Ovary (tissue), 10 donors: ENCODE measurements at regions of chr9 and their contacts with region 1.

Region 1: GRCh38 chr9:98263482-98264357 is 8.3 kb upstream of the TBC1D2 start:
- DNase-seq: peak; percentile 64 to 81 (median 77)
- H3K4me3 ChIP-seq: no peak overlapping the region
- H3K27ac ChIP-seq: no peak overlapping the region
- H3K4me1 ChIP-seq: no peaks in the 10 kb centered on the region
- H3K27me3 ChIP-seq: no peaks in the 10 kb centered on the region
- CTCF ChIP-seq: peak; percentile 38 to 69 (median 50)
- EP300 ChIP-seq: no peak
- POLR2A ChIP-seq: no peak

Region 2: GRCh38 chr9:97934321-97935115 is 329.2 kb before region 1 on chr9:
- intact Hi-C with region 1: loop called in 3 of 4 experiments (anchors 5 to 10 kb)
- DNase-seq: no peak
- H3K4me3 ChIP-seq: no peak overlapping the region
- H3K27ac ChIP-seq: no peak overlapping the region
- H3K4me1 ChIP-seq: no peaks in the 10 kb centered on the region
- H3K27me3 ChIP-seq: no peaks in the 10 kb centered on the region
- CTCF ChIP-seq: no peak
- EP300 ChIP-seq: no peak
- POLR2A ChIP-seq: no peak

Region 3: DNA sequence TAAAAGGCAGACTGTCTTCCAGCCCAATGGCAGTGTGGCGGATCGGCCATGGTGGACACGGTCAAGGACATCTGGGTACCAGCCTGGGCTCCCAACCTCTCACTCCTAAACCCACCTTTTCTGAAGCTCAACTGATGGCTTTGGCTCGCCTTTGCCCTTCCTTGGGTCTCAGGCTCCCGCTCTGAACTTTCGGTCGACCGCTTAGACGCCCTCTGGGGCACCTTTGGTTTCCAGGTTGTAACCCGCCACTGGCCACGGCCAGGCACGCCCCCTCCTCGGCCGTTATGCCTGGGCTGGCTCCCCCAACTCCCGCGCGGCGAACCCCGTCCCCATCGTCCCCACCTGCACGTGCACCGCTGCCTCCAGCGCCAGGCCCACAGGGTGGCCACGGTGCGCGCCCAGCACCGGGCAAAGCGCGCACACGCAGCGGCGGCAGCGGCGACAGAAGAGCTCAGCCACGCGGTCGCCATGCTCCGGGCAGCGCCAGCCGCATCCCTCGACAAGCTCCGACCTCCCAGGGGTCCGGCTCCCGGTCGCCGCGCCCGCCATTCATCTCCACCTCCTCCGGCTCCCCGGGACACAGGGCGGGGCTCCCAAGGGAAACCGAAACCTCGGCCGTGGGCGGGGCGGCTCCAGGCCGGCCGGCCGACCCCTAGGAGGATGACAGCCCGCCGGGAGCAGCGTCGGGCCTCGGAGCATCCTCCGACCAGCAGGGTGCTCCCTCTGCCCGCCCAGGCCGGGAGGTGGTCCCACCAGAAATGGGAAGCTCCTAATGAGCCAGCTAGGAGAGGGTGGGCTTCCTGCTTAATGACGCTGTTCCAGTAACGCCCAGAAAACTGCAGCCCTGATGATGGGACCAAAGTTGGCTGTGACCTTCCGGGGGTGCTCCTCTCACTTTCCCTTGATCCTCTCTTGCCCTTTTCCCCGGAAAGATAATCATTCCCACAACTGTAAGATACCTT is 144.8 kb before region 1 on chr9 and contains the start of gene TRIM14:
- intact Hi-C with region 1: no loop called
- DNase-seq: peak; percentile 27 to 53 (median 40)
- H3K4me3 ChIP-seq: peak within 1 kb of the TSS; percentile 55
- H3K27ac ChIP-seq: peak within 1 kb of the TSS in 1 of 2 donors; percentile 30
- H3K4me1 ChIP-seq: peaks cover 2% of the 10 kb centered on the region
- H3K27me3 ChIP-seq: no peaks in the 10 kb centered on the region
- CTCF ChIP-seq: no peak
- EP300 ChIP-seq: no peak
- POLR2A ChIP-seq: no peak
- total RNA-seq, gene TRIM14: 3.6 to 12.2 (median 5.7) TPM

Region 4: DNA sequence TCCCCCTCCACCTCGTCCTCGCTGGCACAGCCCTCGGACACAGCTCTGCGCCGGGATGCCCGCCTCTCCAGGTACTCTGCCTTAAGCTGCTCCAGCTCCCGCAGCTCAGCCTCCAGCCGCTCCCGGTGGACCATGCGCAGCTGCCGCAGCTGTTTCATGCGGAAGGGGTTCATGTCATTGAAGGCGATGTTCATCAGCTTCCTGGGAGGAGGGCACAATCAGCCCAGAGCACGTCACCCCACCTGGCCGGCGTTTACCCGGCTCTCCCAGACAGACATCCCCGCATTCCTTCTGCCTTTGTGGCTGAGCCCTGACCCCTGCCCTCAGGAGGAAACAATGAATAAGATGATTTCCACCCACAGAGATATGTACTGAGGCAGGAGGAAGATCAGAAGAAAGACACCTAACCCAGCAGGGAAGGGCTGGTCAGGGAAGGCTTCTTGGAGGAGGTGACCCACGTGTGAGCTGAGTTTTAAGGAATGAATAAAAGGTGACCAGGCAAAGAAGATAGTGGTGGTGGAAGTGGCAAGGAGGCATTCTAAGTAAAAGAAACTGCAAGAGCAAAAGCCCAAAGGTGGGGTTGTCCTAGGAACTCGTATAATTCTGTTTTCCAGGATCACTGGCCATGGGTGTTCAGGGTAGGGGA is 64.2 kb before region 1 on chr9:
- intact Hi-C with region 1: loop called in 2 of 4 experiments (anchors 5 to 10 kb)
- DNase-seq: no peak
- H3K4me3 ChIP-seq: no peak overlapping the region
- H3K27ac ChIP-seq: no peak overlapping the region
- H3K4me1 ChIP-seq: no peaks in the 10 kb centered on the region
- H3K27me3 ChIP-seq: no peaks in the 10 kb centered on the region
- CTCF ChIP-seq: no peak
- EP300 ChIP-seq: no peak
- POLR2A ChIP-seq: no peak

Region 5: GRCh38 chr9:98287383-98287782 is 23.7 kb after region 1 on chr9:
- intact Hi-C with region 1: no loop called
- DNase-seq: no peak
- H3K4me3 ChIP-seq: no peak overlapping the region
- H3K27ac ChIP-seq: no peak overlapping the region
- H3K4me1 ChIP-seq: no peaks in the 10 kb centered on the region
- H3K27me3 ChIP-seq: no peaks in the 10 kb centered on the region
- CTCF ChIP-seq: no peak
- EP300 ChIP-seq: no peak
- POLR2A ChIP-seq: no peak